ENCODE measurements at regions of chr2 and their contacts with region 1.

Region 1: DNA sequence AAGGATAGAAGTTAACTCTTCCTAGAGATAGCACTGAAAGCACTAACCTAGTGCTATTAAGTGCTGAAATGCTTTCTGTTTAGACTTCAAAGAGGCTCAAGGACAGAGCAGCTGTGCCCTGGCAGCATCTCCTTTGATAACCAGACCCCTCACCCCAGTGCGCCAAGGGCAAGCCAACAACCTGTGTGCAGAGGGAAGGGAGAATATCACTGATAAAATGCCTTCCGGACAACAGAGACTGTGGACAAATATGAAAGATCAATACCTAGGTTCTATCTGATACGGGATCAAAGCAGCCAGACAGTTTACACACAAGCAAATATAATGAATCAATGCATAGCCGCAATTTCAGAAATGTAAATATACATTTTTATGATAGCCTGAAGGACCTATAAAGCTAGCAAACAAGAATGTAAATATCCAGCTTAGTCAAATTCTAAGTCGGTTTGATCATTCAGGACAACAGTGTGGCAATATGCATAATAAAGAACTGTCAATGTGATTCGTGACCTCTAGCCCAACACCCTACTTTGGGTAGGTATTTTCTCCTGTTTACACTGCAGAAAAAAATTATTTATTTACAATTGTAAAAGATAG is 91.8 kb upstream of the RFX8 start:
- DNase-seq: no peak
- ATAC-seq: peak; percentile 83
- H3K4me3 ChIP-seq: no peak overlapping the region
- H3K27ac ChIP-seq: no peak overlapping the region
- H3K4me1 ChIP-seq: peaks cover 13% of the 10 kb centered on the region
- H3K27me3 ChIP-seq: peaks cover 11% of the 10 kb centered on the region
- CTCF ChIP-seq: no peak

Region 2: GRCh38 chr2:100018341-100019193 is 1548.2 kb before region 1 on chr2:
- CTCF ChIA-PET with region 1: no interaction called
- POLR2A ChIA-PET with region 1: no interaction called
- in situ Hi-C with region 1: no loop called
- intact Hi-C with region 1: no loop called
- DNase-seq: no peak
- ATAC-seq: no peak
- H3K4me3 ChIP-seq: no peak overlapping the region
- H3K27ac ChIP-seq: no peak overlapping the region
- H3K4me1 ChIP-seq: peaks cover under 1% of the 10 kb centered on the region; the same call in 1 of the 2 replicates
- H3K27me3 ChIP-seq: no peaks in the 10 kb centered on the region; the same call in 1 of the 2 replicates
- CTCF ChIP-seq: no peak

Region 3: DNA sequence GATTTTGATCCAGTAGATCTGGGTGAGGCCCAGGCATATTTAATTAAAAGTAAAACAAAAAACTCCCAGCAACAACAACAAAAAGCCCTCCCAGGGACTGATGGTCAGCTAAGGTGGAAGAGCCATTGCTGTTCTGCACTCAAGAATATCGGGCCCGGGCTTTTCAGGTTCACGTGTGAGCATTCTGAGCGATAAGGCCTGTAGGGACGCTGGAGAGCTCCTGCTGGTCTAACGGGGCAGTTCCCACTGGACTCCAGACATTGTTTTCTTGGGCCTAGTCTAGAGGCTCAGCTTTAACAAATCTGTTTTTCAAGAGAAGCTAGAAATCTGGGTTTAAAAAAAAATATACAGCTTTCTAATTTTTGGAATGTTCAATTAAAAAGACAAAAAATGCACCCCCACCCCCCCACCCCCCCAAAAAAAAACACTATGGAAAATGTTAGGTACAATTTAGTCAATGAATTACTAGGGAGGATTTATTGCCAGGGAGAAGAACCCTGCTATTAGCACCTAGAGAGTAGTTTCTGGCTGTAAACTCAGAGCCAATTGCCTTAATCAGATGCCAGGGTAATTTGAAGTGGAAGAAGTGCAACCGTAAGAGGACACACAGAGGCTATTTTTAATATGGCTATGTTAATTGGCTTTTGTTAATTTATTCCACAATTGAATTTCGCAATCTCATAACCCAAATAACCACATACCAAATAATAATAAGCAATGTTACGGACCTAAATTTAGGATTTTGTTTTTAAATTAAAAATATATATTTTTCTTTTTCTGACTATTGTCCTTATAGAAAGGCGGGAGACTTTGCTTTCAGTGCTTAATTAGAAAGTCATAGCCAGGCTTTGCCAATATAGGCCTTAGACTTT is 209.7 kb after region 1 on chr2:
- CTCF ChIA-PET with region 1: no interaction called
- POLR2A ChIA-PET with region 1: no interaction called
- in situ Hi-C with region 1: no loop called
- intact Hi-C with region 1: no loop called
- DNase-seq: no peak
- ATAC-seq: no peak
- H3K4me3 ChIP-seq: no peak overlapping the region
- H3K27ac ChIP-seq: no peak overlapping the region
- H3K4me1 ChIP-seq: peaks cover 3% of the 10 kb centered on the region; the same call in 1 of the 2 replicates
- H3K27me3 ChIP-seq: no peaks in the 10 kb centered on the region
- CTCF ChIP-seq: peak; percentile 30; the same call in 1 of the 2 replicates

Region 4: GRCh38 chr2:101796825-101797600 is 230.3 kb after region 1 on chr2:
- CTCF ChIA-PET with region 1: no interaction called
- POLR2A ChIA-PET with region 1: interaction called, 14 read pairs
- in situ Hi-C with region 1: no loop called
- intact Hi-C with region 1: no loop called
- DNase-seq: no peak
- ATAC-seq: no peak
- H3K4me3 ChIP-seq: no peak overlapping the region
- H3K27ac ChIP-seq: no peak overlapping the region
- H3K4me1 ChIP-seq: no peaks in the 10 kb centered on the region
- H3K27me3 ChIP-seq: no peaks in the 10 kb centered on the region
- CTCF ChIP-seq: no peak

Region 5: DNA sequence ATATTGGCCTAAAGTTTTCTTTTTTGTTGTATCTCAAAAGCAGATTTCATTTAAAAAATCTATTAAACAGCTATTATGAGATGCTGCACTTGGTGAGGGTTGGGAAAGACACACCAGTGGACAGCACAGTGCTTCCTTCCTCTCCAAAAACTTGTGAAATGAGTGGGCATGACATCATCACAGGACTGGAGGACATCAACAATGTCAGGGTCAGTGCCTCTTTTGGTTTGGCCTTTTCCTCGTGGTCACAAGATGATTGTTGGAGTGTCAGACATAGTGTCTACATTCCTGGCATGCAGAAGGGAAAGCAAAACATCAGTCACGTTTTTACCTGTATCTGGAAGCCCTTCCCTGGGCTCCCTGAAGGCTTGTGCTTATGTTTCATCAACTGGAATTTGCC is 474.6 kb after region 1 on chr2:
- CTCF ChIA-PET with region 1: no interaction called
- POLR2A ChIA-PET with region 1: no interaction called
- in situ Hi-C with region 1: no loop called
- intact Hi-C with region 1: no loop called
- DNase-seq: no peak
- ATAC-seq: no peak
- H3K4me3 ChIP-seq: no peak overlapping the region
- H3K27ac ChIP-seq: no peak overlapping the region
- H3K4me1 ChIP-seq: no peaks in the 10 kb centered on the region
- H3K27me3 ChIP-seq: peaks cover 5% of the 10 kb centered on the region; the same call in 1 of the 2 replicates
- CTCF ChIP-seq: no peak

Region 6: GRCh38 chr2:102149644-102150455 is 583.1 kb after region 1 on chr2:
- CTCF ChIA-PET with region 1: interaction called, 12 read pairs
- POLR2A ChIA-PET with region 1: no interaction called
- in situ Hi-C with region 1: no loop called
- intact Hi-C with region 1: no loop called
- DNase-seq: no peak
- ATAC-seq: no peak
- H3K4me3 ChIP-seq: no peak overlapping the region
- H3K27ac ChIP-seq: no peak overlapping the region
- H3K4me1 ChIP-seq: no peaks in the 10 kb centered on the region
- H3K27me3 ChIP-seq: no peaks in the 10 kb centered on the region
- CTCF ChIP-seq: no peak

Region 7: DNA sequence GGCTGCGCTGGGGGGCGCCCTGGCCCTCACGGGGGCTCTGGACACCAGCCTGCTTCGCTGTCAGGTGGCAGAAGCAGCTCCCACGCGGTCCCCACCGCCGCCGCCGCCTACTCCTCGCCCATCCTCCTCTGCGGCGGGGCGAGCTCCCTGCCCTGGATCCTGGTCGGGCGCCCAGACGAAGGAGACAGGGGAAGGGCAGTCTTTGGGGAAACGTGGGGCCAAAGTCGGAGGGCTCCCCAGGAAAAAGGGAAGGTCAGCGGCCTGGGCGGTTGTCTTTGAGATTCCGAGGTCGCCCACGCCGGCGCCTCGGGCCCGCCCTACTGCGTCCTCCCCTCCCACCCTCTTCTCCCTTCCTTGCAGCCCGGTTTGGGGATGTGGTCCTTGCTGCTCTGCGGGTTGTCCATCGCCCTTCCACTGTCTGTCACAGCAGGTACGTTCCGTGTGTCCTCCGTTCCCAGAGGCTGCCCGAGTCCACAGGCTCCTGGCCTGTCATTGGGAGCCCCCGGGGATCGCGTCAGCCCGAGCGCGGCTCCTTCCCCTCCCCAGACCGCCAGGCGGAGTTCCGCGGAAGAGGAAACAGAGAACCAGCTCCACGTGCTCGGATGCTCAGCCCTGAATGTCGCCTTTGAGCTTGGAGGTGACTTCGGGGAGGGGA is 620.9 kb after region 1 on chr2:
- CTCF ChIA-PET with region 1: no interaction called
- POLR2A ChIA-PET with region 1: no interaction called
- in situ Hi-C with region 1: no loop called
- intact Hi-C with region 1: no loop called
- DNase-seq: no peak
- ATAC-seq: no peak
- H3K4me3 ChIP-seq: no peak overlapping the region
- H3K27ac ChIP-seq: no peak overlapping the region
- H3K4me1 ChIP-seq: no peaks in the 10 kb centered on the region
- H3K27me3 ChIP-seq: no peaks in the 10 kb centered on the region; the same call in 1 of the 2 replicates
- CTCF ChIP-seq: no peak

Measured in Panc1 (cell line).